Posterior vena cava (tissue), 2 donors: ENCODE measurements at regions of chr6 and their contacts with region 1.

Region 1: DNA sequence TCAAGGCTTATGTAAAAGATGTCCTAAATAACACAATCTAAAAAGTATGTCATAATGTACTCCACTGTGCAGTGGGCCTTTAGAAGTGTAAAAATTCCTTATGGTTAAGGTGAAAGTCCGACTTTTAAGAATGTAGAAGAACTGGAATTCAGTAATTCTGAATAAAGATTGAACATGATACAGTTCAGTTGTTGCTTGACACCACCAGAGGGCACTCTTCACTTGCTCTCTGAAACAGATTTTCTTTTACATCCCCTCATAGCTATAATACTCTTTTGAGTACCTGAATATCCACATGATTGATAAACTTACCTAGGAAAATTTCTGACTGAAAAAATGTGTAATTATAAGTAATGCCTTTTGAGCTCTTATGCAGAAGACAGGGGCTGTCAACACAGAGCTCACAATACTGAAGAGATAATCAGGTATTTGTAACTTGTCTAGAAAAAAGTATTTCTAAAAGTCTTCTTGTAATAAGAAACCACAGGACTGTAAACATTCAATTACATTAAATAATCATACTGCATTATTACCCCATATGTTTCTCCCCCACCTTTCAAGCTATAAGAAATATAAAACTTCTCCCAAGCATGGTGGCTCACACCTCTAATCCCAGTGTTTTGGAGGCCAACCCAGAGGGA is 92.1 kb downstream of the POPDC3 start:
- DNase-seq: no peak

Region 2: GRCh38 chr6:105402939-105403935 is 315.5 kb after region 1 on chr6 and contains the start of gene PREP:
- intact Hi-C with region 1: loop called in 1 of 2 experiments (anchors 10 kb)
- DNase-seq: peak; percentile 97
- total RNA-seq, gene PREP: 20.5 to 21.2 TPM

Region 3: DNA sequence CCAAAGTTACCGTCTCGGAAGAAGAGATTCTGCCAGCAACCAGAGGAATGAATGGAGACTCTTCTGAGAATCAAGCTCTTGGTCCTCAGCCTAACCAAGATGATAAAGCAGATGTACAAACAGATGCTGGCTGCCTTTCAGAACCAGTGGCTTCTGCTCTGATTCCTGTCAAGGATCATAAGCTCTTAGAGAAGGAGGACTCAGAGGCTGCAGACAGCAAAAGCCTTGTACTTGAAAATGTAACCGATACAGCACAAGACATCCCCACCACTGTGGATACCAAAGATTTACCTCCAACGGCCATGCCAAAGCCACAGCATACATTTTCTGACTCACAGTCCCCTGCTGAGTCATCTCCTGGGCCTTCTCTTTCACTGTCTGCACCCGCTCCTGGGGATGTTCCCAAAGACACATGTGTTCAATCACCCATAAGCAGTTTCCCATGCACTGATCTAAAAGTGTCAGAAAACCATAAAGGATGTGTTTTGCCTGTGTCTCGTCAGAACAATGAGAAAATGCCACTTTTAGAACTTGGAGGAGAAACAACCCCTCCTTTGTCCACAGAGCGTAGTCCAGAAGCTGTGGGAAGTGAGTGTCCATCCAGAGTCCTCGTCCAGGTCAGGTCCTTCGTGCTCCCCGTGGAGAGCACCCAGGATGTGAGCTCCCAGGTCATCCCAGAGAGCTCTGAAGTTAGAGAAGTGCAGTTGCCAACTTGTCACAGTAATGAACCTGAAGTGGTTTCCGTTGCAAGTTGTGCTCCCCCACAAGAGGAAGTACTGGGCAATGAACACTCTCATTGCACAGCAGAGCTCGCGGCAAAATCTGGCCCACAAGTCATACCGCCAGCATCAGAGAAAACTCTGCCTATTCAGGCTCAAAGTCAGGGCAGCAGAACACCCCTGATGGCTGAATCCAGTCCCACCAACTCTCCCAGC is 1432.0 kb after region 1 on chr6:
- intact Hi-C with region 1: loop called in 1 of 2 experiments (anchors 5 kb)
- DNase-seq: peak; percentile 85